ENCODE measurements at regions of chr2 and their contacts with region 1.

Region 1: DNA sequence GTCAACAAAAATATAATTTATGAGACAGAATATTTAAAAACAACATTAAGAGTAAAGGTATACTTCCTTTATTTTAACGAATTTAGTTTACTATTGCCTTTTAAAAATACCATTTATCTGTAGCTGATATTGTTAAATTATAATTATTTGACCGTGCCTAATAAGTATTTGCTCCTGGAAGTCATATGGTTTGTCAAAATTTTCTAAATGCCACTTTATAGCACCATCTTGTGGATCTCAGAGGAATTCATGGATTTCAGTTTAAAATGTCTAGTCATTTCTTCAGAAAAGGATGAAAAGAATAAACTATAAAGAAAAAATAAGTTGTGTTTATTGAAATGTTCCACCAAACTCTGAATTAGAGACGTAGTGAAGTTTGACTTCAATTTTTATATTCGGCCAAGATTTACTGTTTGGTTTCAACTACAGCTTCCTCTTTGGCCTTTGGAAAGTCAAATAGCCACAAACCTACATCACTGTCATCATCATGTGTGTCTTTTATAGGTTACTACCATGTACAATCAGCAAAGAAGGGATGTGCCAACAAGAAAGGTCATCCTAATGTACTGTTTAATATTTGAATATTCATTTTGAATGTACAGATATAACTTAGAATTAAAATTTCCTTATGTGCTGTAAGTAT is 10.3 kb upstream of the FTCDNL1 start:
- DNase-seq: no peak
- H3K4me3 ChIP-seq: no peak overlapping the region
- H3K27ac ChIP-seq: no peak overlapping the region
- H3K4me1 ChIP-seq: no peaks in the 10 kb centered on the region
- H3K27me3 ChIP-seq: no peaks in the 10 kb centered on the region
- CTCF ChIP-seq: peak; percentile 70

Region 2: GRCh38 chr2:199459286-199460016 is 401.8 kb before region 1 on chr2:
- CTCF ChIA-PET with region 1: no interaction called
- POLR2A ChIA-PET with region 1: no interaction called
- intact Hi-C with region 1: no loop called
- DNase-seq: peak; percentile 76 to 81
- H3K4me3 ChIP-seq: peak overlapping the region; percentile 69
- H3K27ac ChIP-seq: peak overlapping the region; percentile 78
- H3K4me1 ChIP-seq: peaks cover 24% of the 10 kb centered on the region
- H3K27me3 ChIP-seq: no peaks in the 10 kb centered on the region
- CTCF ChIP-seq: no peak

Region 3: GRCh38 chr2:199596549-199596948 is 264.7 kb before region 1 on chr2:
- CTCF ChIA-PET with region 1: no interaction called
- POLR2A ChIA-PET with region 1: no interaction called
- intact Hi-C with region 1: loop called (anchors 5 kb)
- DNase-seq: no peak
- H3K4me3 ChIP-seq: no peak overlapping the region
- H3K27ac ChIP-seq: no peak overlapping the region
- H3K4me1 ChIP-seq: no peaks in the 10 kb centered on the region
- H3K27me3 ChIP-seq: peaks cover 4% of the 10 kb centered on the region; the same call in 1 of the 2 replicates
- CTCF ChIP-seq: peak; percentile 70

Region 4: GRCh38 chr2:199739413-199740110 is 121.7 kb before region 1 on chr2:
- CTCF ChIA-PET with region 1: no interaction called
- POLR2A ChIA-PET with region 1: no interaction called
- intact Hi-C with region 1: loop called (anchors 10 kb)
- DNase-seq: peak in 1 of 2 experiments; percentile 58
- H3K4me3 ChIP-seq: no peak overlapping the region
- H3K27ac ChIP-seq: no peak overlapping the region
- H3K4me1 ChIP-seq: peaks cover 14% of the 10 kb centered on the region
- H3K27me3 ChIP-seq: no peaks in the 10 kb centered on the region
- CTCF ChIP-seq: peak; percentile 94